ENCODE measurements at regions of chr17 and their contacts with region 1.

Region 1: DNA sequence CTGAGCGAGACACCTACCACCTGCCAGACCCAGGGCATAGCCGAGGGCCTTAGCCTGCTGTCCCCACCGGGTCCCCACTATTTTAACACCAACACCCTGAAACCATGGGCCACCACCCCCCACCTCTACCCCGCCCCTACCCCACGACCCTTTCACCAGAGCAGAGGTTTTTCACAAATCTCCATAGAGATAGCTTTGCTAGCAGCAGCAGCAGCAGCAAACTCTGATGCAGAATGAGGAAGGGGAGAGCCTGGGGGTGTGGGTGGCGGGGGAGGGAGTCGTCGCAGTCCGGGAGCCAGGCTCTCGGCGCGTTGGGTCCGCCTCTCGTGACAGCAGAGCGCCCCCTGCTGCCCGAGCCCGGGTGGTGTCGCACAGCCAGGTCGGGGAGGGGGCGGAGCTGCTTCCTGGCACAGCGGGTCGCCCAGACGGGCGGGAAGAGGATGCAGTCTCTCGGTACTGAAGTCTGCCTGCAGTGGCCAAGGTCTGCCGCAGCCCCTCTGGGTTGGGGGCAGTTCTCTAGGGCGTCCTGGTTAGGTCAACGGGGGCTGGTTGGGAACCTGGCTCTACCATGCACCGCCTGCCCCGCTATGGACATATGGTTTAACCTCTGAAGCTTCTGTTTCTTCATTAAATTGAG is 38.1 kb upstream of the CCDC182 start:
- DNase-seq: peak; percentile 95
- ATAC-seq: peak; percentile 95
- H3K4me3 Mint-ChIP-seq: peak overlapping the region; percentile 17
- H3K27ac Mint-ChIP-seq: no peak overlapping the region
- H3K4me1 Mint-ChIP-seq: peaks cover 9% of the 10 kb centered on the region
- H3K27me3 Mint-ChIP-seq: peaks cover 19% of the 10 kb centered on the region
- CTCF ChIP-seq: peak; percentile 93

Region 2: DNA sequence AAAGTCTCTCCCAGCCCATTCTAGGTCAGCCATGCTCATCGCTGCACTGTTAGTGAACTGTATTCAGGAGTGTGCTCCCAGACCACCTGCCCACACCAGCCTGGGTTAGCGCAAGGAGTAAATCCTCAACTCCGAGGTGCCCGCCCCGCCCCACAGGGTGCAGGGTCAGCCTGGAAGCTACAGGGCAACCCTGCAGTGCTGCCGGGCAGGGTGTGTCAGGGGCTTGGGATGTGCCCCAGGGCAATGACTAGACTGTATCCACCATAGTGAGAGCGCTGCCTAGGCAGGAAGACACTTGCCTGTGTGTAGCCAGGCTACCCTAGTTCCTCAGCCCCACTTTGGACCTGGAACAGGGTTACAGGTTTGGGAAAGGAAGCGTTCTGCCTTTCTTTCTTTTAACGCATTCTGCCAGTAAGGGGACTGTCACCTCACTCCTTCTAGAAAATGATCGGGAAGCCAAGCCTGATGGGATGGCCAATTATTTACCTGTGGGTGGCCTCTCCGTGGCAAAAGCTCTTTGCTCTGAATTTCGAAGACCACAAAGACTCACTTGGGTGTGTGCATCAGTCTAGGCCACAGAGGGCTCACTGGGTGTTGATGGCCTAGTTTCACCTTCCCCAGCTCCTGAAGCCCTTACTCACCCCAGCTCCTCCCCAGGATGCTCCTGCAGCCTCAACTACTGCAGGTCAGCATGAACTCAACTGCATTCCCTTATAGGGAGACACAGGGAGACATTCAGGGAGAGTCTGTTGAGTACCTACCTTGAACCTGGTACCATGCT is 129.0 kb before region 1 on chr17:
- CTCF ChIA-PET with region 1: no interaction called
- POLR2A ChIA-PET with region 1: no interaction called
- DNase-seq: no peak
- ATAC-seq: no peak
- H3K4me3 Mint-ChIP-seq: no peak overlapping the region
- H3K27ac Mint-ChIP-seq: peak overlapping the region; percentile 19
- H3K4me1 Mint-ChIP-seq: peaks cover 24% of the 10 kb centered on the region
- H3K27me3 Mint-ChIP-seq: no peaks in the 10 kb centered on the region
- CTCF ChIP-seq: no peak

Region 3: DNA sequence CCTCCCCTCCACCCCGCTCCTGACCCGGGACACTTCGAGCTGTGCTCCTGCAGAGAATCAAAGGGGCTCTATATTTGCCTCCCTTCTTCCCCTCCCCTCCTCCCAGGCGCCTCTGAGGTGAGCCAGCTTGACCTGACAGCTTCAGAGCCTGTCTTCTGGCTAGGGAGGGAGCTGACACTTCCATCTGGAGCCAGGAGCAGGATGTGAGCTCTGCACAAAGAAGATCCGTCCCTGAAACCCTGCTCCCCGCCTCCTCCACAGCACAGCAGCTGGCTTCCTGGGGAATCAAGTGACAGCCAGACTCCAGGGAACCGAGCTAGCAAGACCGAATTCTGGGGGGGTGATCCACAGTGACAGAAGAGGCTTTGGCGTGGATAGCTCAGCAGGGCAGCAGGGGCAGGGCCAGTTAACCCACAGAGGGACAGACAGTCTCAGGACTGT is 75.4 kb before region 1 on chr17:
- CTCF ChIA-PET with region 1: interaction called, 15 read pairs
- POLR2A ChIA-PET with region 1: no interaction called
- DNase-seq: peak; percentile 39
- ATAC-seq: peak; percentile 90
- H3K4me3 Mint-ChIP-seq: peak overlapping the region; percentile 46
- H3K27ac Mint-ChIP-seq: no peak overlapping the region
- H3K4me1 Mint-ChIP-seq: peaks cover 19% of the 10 kb centered on the region
- H3K27me3 Mint-ChIP-seq: peaks cover 14% of the 10 kb centered on the region
- CTCF ChIP-seq: no peak

Region 4: DNA sequence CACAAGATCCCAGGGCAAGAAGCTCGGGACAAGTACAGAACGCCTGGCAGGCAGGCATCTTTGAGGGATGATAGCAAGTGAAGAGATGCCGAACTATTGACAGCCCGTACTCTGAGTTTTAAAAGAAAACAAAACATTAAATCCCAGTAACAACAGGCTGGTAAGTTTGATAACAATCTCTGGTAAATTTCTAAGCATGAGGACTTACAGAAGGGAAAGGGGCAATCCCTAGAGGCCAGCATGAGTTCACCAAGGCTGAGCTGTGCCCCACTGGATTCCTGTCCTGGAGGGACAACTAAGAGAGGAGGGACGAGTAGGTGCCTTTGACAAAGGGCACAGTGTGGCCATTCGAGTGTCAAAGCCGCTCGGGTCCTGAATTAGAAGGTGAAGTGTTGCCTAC is 64.3 kb before region 1 on chr17:
- CTCF ChIA-PET with region 1: no interaction called
- POLR2A ChIA-PET with region 1: no interaction called
- DNase-seq: no peak
- ATAC-seq: no peak
- H3K4me3 Mint-ChIP-seq: no peak overlapping the region
- H3K27ac Mint-ChIP-seq: no peak overlapping the region
- H3K4me1 Mint-ChIP-seq: no peaks in the 10 kb centered on the region
- H3K27me3 Mint-ChIP-seq: peaks cover 13% of the 10 kb centered on the region
- CTCF ChIP-seq: no peak

Region 5: GRCh38 chr17:57747221-57748017 is 35.8 kb before region 1 on chr17:
- CTCF ChIA-PET with region 1: interaction called, 35 read pairs
- POLR2A ChIA-PET with region 1: no interaction called
- DNase-seq: no peak
- ATAC-seq: peak; percentile 79
- H3K4me3 Mint-ChIP-seq: no peak overlapping the region
- H3K27ac Mint-ChIP-seq: no peak overlapping the region
- H3K4me1 Mint-ChIP-seq: peaks cover 4% of the 10 kb centered on the region
- H3K27me3 Mint-ChIP-seq: no peaks in the 10 kb centered on the region; the same call in 1 of the 2 replicates
- CTCF ChIP-seq: peak; percentile 43

Region 6: DNA sequence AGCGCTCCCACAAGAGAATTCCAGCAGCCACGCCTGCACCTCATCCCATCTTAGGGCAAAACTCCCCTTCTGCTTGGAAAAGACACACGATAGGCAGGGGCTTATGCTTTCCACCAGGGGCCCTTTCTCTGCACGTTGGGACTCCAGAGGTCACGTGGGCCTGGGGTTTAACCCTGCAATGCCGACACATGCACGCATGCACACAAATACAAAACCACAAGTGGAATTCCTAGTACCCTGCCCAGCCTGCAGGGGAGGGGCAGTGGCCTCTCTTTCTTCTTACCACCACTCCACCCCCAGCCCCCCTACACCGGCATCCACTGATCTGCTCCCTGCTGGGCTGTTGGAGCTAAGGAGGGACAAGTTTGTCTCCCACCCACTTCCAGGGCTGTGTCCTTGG is 21.3 kb before region 1 on chr17:
- CTCF ChIA-PET with region 1: interaction called, 45 read pairs
- POLR2A ChIA-PET with region 1: no interaction called
- DNase-seq: no peak
- ATAC-seq: peak; percentile 45
- H3K4me3 Mint-ChIP-seq: no peak overlapping the region
- H3K27ac Mint-ChIP-seq: no peak overlapping the region
- H3K4me1 Mint-ChIP-seq: peaks cover 19% of the 10 kb centered on the region
- H3K27me3 Mint-ChIP-seq: peaks cover 6% of the 10 kb centered on the region; the same call in 1 of the 2 replicates
- CTCF ChIP-seq: no peak

Region 7: GRCh38 chr17:57803025-57803424 is 19.8 kb after region 1 on chr17:
- CTCF ChIA-PET with region 1: interaction called, 31 read pairs
- POLR2A ChIA-PET with region 1: no interaction called
- DNase-seq: no peak
- ATAC-seq: peak; percentile 41; the same call in 1 of the 2 replicates
- H3K4me3 Mint-ChIP-seq: no peak overlapping the region
- H3K27ac Mint-ChIP-seq: no peak overlapping the region
- H3K4me1 Mint-ChIP-seq: peaks cover 7% of the 10 kb centered on the region
- H3K27me3 Mint-ChIP-seq: peaks cover 12% of the 10 kb centered on the region
- CTCF ChIP-seq: no peak

Region 8: DNA sequence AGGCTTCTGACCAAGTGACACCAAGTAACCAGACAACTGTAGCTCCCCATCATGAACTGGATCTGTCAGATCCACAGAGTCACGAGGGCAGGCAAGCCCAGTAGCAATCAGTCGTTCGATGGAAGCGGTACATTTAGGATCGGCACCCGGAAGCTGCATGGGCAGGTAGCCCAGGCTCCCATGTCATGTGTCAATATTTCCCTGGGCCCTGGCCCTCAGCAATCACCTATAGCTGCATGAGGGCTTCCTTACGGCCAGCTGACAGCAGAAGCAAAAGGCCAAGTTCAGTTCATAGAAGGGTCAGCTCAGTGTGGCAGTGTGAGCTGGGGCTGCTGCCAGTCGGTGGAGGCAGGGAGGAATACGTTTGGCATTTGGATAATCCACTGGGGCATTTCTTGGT is 34.8 kb after region 1 on chr17:
- CTCF ChIA-PET with region 1: interaction called, 11 read pairs
- POLR2A ChIA-PET with region 1: no interaction called
- DNase-seq: no peak
- ATAC-seq: no peak
- H3K4me3 Mint-ChIP-seq: no peak overlapping the region
- H3K27ac Mint-ChIP-seq: no peak overlapping the region
- H3K4me1 Mint-ChIP-seq: peaks cover 11% of the 10 kb centered on the region
- H3K27me3 Mint-ChIP-seq: peaks cover 2% of the 10 kb centered on the region; the same call in 1 of the 2 replicates
- CTCF ChIP-seq: no peak

Region 9: GRCh38 chr17:57849874-57850754 is 66.9 kb after region 1 on chr17 and contains the start of gene MRPS23:
- CTCF ChIA-PET with region 1: interaction called, 8 read pairs
- POLR2A ChIA-PET with region 1: interaction called, 10 read pairs
- DNase-seq: peak; percentile 98
- ATAC-seq: peak; percentile 91
- H3K4me3 Mint-ChIP-seq: peak within 1 kb of the TSS; percentile 96
- H3K27ac Mint-ChIP-seq: peak within 1 kb of the TSS; percentile 98
- H3K4me1 Mint-ChIP-seq: peaks cover 30% of the 10 kb centered on the region
- H3K27me3 Mint-ChIP-seq: no peaks in the 10 kb centered on the region
- CTCF ChIP-seq: no peak
- total RNA-seq, gene MRPS23: 57.9 to 65.3 TPM (median 58.1 TPM) in 3 replicates

Region 10: GRCh38 chr17:58279016-58279711 is 495.9 kb after region 1 on chr17:
- CTCF ChIA-PET with region 1: no interaction called
- POLR2A ChIA-PET with region 1: no interaction called
- DNase-seq: no peak
- ATAC-seq: no peak; the same call in 1 of the 2 replicates
- H3K4me3 Mint-ChIP-seq: no peak overlapping the region
- H3K27ac Mint-ChIP-seq: no peak overlapping the region
- H3K4me1 Mint-ChIP-seq: peaks cover 7% of the 10 kb centered on the region
- H3K27me3 Mint-ChIP-seq: peaks cover 16% of the 10 kb centered on the region
- CTCF ChIP-seq: no peak

Measured in WTC11 (cell line).